IMR-90 (cell line): ENCODE measurements at regions of chr19 and their contacts with region 1.

Region 1: GRCh38 chr19:3429581-3430080 is 50.7 kb downstream of the SMIM24 start:
- DNase-seq: peak; percentile 65
- ATAC-seq: peak; percentile 84
- H3K4me3 ChIP-seq: no peak overlapping the region
- H3K27ac ChIP-seq: no peak overlapping the region
- H3K4me1 ChIP-seq: peaks cover 9% of the 10 kb centered on the region
- H3K27me3 ChIP-seq: no peaks in the 10 kb centered on the region
- CTCF ChIP-seq: peak; percentile 84
- POLR2A ChIP-seq: no peak
- RAD21 ChIP-seq: peak; percentile 88

Region 2: GRCh38 chr19:2840794-2841790 is 588.5 kb before region 1 on chr19 and contains the start of gene ZNF555:
- CTCF ChIA-PET with region 1: no interaction called
- POLR2A ChIA-PET with region 1: no interaction called
- dilution Hi-C with region 1: no loop called
- in situ Hi-C with region 1: no loop called
- intact Hi-C with region 1: no loop called
- DNase-seq: peak; percentile 98
- ATAC-seq: peak; percentile 97
- H3K4me3 ChIP-seq: peak within 1 kb of the TSS; percentile 98
- H3K27ac ChIP-seq: peak within 1 kb of the TSS; percentile 80
- H3K4me1 ChIP-seq: peaks cover 3% of the 10 kb centered on the region
- H3K27me3 ChIP-seq: no peaks in the 10 kb centered on the region
- CTCF ChIP-seq: peak; percentile 41
- POLR2A ChIP-seq: peak; percentile 29; the same call in 1 of the 2 replicates
- RAD21 ChIP-seq: no peak
- total RNA-seq, gene ZNF555: 6.4 and 9.7 TPM in 2 replicates

Region 3: DNA sequence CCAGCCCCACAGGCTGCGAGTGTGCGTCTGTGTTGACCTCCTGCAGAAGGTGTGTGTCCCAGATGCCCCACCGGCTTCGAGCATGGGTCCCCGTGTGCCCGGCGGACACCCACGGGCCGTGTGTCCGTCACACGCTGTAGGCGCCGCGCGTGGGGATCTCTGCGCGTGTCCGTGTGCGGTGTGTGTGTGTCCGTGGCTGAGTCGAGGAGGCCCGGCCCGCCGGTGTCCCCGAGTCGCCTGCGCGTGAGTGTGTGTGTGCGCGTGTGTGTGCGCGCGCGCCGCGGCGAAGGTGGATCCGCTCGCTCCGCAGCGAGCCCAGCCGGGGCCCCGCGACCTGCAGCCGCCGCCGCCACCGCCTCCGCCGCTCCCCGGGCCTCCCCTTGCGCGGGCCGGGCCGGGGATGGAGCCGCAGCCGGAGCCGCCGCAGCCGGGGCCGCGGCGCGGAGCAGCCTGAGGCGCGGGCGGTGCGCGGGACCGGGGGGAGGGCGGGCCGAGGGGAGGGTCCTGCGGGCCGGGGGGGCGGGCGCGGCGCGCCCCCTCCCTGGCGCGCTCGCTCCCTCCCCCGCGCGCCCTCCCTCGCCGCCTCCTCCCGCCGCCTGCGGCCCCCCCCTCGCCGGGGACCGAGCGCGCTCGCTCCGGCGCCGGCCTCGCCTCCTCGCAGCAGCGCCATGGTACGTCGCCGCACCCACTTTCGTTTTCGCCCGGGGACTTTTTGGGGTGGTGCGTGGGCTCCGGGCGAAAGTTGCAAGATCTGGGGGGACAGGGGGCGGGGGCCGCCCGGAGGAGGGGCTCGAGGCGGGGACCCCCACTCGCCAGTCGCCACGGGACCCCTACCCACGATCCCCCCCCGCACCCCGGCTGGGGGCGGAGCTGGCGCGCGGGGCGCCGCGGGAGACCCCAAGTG is 70.4 kb before region 1 on chr19:
- CTCF ChIA-PET with region 1: no interaction called
- POLR2A ChIA-PET with region 1: no interaction called
- dilution Hi-C with region 1: no loop called
- in situ Hi-C with region 1: no loop called
- intact Hi-C with region 1: loop called (anchors 2 kb)
- DNase-seq: peak; percentile 51
- ATAC-seq: peak; percentile 78
- H3K4me3 ChIP-seq: peak overlapping the region; percentile 75
- H3K27ac ChIP-seq: peak overlapping the region; percentile 87
- H3K4me1 ChIP-seq: peaks cover 3% of the 10 kb centered on the region; the same call in 1 of the 2 replicates
- H3K27me3 ChIP-seq: no peaks in the 10 kb centered on the region
- CTCF ChIP-seq: no peak
- POLR2A ChIP-seq: no peak
- RAD21 ChIP-seq: no peak